ENCODE measurements at regions of chr5 and their contacts with region 1.

Region 1: DNA sequence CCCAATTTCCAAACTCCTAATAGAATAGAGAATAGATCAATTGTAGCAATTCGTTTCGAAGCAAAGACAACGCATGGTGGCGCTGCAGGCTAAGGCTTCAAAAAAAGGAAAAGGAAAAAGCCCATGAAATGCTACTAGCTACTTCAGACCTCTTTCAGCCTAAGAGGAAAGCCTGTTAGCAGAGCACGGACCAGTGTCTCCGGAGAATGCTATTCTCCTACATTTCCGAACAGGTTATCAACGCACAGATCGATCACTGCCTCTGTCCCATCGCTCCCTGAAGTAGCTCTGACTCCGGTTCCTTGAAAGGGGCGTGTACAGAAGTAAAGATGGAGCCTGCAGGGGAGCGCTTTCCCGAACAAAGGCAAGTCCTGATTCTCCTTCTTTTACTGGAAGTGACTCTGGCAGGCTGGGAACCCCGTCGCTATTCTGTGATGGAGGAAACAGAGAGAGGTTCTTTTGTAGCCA is at the start of gene PCDHB15:
- DNase-seq: peak; percentile 85
- ATAC-seq: peak; percentile 87
- H3K4me3 Mint-ChIP-seq: peak within 1 kb of the TSS; percentile 85
- H3K27ac Mint-ChIP-seq: peak within 1 kb of the TSS; percentile 93
- H3K4me1 Mint-ChIP-seq: peaks cover 18% of the 10 kb centered on the region
- H3K27me3 Mint-ChIP-seq: no peaks in the 10 kb centered on the region
- CTCF ChIP-seq: peak; percentile 70
- total RNA-seq, gene PCDHB15: 7.7 to 8.7 TPM (median 8.4 TPM) in 3 replicates

Region 2: GRCh38 chr5:141192110-141192732 is 53.1 kb before region 1 on chr5 and contains the start of gene PCDHB10:
- CTCF ChIA-PET with region 1: interaction called, 12 read pairs
- POLR2A ChIA-PET with region 1: no interaction called
- DNase-seq: peak; percentile 89
- ATAC-seq: peak; percentile 88
- H3K4me3 Mint-ChIP-seq: peak within 1 kb of the TSS; percentile 58
- H3K27ac Mint-ChIP-seq: no peak within 1 kb of the TSS
- H3K4me1 Mint-ChIP-seq: peaks cover 4% of the 10 kb centered on the region
- H3K27me3 Mint-ChIP-seq: peaks cover 4% of the 10 kb centered on the region
- CTCF ChIP-seq: peak; percentile 70; the same call in 1 of the 2 replicates
- total RNA-seq, gene PCDHB10: 1.4 to 1.9 TPM (median 1.7 TPM) in 3 replicates

Region 3: DNA sequence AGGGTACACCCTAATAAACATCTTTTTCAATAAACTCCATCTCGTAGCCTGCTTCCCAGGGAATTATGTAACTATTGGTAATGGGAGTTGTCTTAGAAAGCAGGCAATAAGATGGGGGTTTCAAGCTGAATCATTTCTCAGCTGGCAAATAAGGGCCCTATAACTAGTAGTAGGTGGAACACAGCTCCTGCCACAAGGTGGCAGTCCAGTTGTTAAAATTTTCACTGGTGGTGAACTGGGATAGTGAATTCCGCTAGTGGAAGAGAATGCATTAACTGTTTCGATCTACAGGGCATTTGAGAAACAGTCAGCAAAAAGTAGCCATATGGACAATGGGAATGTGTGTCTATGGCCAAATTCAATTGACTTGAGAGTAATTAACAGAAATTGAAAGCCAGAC is 27.6 kb after region 1 on chr5:
- CTCF ChIA-PET with region 1: interaction called, 39 read pairs
- POLR2A ChIA-PET with region 1: no interaction called
- DNase-seq: peak; percentile 47
- ATAC-seq: peak; percentile 89
- H3K4me3 Mint-ChIP-seq: no peak overlapping the region
- H3K27ac Mint-ChIP-seq: no peak overlapping the region
- H3K4me1 Mint-ChIP-seq: no peaks in the 10 kb centered on the region
- H3K27me3 Mint-ChIP-seq: no peaks in the 10 kb centered on the region
- CTCF ChIP-seq: no peak

Region 4: DNA sequence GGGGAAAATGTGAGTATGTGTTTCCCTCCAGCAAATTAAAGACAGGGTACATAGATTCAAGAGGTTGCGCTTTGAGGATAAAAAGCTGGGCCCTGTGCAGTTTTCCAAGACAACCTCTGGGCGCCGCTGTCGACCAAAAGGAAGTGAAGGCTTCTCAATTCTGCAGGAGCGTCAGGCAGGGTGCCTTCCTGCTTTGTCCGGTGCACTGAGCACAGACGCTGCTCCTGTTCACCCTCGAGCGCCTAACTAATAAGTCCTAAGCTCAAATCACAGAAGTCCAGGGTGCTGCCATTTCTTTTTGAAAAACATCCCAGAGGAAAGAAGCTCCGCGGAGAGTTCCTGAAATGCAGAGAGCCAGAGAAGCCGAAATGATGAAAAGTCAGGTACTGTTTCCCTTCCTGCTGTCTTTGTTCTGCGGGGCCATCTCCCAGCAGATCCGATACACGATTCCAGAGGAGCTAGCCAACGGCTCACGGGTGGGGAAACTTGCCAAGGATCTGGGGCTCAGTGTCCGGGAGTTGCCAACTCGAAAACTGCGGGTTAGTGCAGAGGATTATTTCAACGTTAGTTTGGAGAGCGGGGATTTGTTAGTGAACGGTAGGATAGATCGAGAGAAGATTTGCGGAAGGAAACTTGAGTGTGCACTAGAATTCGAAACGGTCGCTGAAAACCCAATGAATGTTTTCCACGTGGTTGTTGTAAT is 104.8 kb after region 1 on chr5 and contains the start of gene PCDHGB1:
- CTCF ChIA-PET with region 1: interaction called, 25 read pairs
- POLR2A ChIA-PET with region 1: no interaction called
- DNase-seq: peak; percentile 86
- ATAC-seq: peak; percentile 96
- H3K4me3 Mint-ChIP-seq: peak within 1 kb of the TSS; percentile 72
- H3K27ac Mint-ChIP-seq: peak within 1 kb of the TSS; percentile 47; the same call in 1 of the 2 replicates
- H3K4me1 Mint-ChIP-seq: peaks cover 2% of the 10 kb centered on the region
- H3K27me3 Mint-ChIP-seq: peaks cover 3% of the 10 kb centered on the region
- CTCF ChIP-seq: peak; percentile 50
- total RNA-seq, gene PCDHGB1: 4.9 to 5.6 TPM (median 5.5 TPM) in 3 replicates

Region 5: GRCh38 chr5:141420855-141421496 is 175.7 kb after region 1 on chr5 and contains the start of gene PCDHGA11:
- CTCF ChIA-PET with region 1: interaction called, 24 read pairs
- POLR2A ChIA-PET with region 1: interaction called, 3 read pairs
- DNase-seq: peak; percentile 77
- ATAC-seq: peak; percentile 52
- H3K4me3 Mint-ChIP-seq: peak within 1 kb of the TSS; percentile 81
- H3K27ac Mint-ChIP-seq: peak within 1 kb of the TSS; percentile 47
- H3K4me1 Mint-ChIP-seq: peaks cover 26% of the 10 kb centered on the region
- H3K27me3 Mint-ChIP-seq: peaks cover 14% of the 10 kb centered on the region
- CTCF ChIP-seq: peak; percentile 68
- total RNA-seq, gene PCDHGA11: 7.0 to 8.4 TPM (median 7.1 TPM) in 3 replicates

Region 6: DNA sequence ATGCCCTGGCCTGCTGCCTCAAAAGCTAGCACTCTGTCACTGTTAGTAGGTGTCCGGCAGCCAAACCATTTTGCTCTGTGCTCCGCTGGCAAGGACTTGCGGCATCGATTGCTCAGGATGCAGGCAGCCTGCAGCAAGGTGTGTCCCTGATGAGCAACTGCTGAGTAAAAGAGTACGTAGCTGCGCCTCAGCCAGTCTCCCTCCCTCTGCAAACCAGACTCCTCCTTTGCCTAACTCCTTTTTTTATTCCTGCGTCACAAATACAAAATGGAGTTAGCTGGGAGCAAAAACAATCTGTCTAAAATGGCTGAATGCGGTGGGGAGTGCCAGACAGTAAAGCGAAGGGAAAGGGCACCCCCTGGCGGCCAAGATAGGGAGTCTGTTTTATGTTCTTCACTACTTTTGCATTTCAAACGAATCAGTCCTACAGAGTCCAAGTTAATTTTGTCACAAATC is 312.4 kb after region 1 on chr5:
- CTCF ChIA-PET with region 1: interaction called, 17 read pairs
- POLR2A ChIA-PET with region 1: no interaction called
- DNase-seq: peak; percentile 85
- ATAC-seq: peak; percentile 57
- H3K4me3 Mint-ChIP-seq: peak overlapping the region; percentile 61
- H3K27ac Mint-ChIP-seq: peak overlapping the region; percentile 97
- H3K4me1 Mint-ChIP-seq: peaks cover 38% of the 10 kb centered on the region
- H3K27me3 Mint-ChIP-seq: no peaks in the 10 kb centered on the region
- CTCF ChIP-seq: peak; percentile 92